CD8-positive, alpha-beta T cell (primary cell): ENCODE measurements at regions of chr15 and their contacts with region 1.

Region 1: GRCh38 chr15:78108299-78109084 is 16.1 kb downstream of the SH2D7 start:
- DNase-seq: peak; percentile 69 to 92 (median 85)
- ATAC-seq: peak; percentile 79
- H3K4me3 ChIP-seq: no peak overlapping the region
- H3K4me3 Mint-ChIP-seq: no peak overlapping the region
- H3K27ac ChIP-seq: no peak overlapping the region
- H3K27ac Mint-ChIP-seq: no peak overlapping the region
- H3K4me1 ChIP-seq: peaks cover 34% of the 10 kb centered on the region
- H3K4me1 Mint-ChIP-seq: peaks cover 35% of the 10 kb centered on the region
- H3K27me3 ChIP-seq: no peaks in the 10 kb centered on the region
- H3K27me3 Mint-ChIP-seq: no peaks in the 10 kb centered on the region
- CTCF ChIP-seq: peak; percentile 80

Region 2: DNA sequence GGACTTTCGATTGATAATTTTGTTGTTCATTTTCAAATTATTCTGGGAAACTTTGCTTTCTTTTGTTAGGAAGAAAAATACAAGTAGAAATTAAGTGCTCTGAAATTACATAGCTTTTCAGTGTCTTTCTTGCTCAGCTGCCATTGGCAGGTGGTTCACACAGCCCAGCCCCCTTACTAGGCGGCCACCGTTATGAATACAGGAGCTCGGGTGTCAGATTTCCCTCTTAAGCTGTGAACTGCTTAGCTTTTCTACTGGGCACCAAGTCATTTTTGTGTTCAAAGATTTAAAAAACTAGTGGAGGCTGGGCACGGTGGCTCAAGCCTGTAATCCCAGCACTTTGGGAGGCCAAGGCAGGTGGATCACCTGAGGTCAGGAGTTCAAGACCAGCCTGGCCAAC is 632.6 kb before region 1 on chr15:
- CTCF ChIA-PET with region 1: no interaction called
- POLR2A ChIA-PET with region 1: no interaction called
- intact Hi-C with region 1: no loop called
- DNase-seq: no peak
- ATAC-seq: no peak
- H3K4me3 ChIP-seq: no peak overlapping the region
- H3K4me3 Mint-ChIP-seq: no peak overlapping the region
- H3K27ac ChIP-seq: no peak overlapping the region
- H3K27ac Mint-ChIP-seq: no peak overlapping the region
- H3K4me1 ChIP-seq: no peaks in the 10 kb centered on the region
- H3K4me1 Mint-ChIP-seq: peaks cover 2% of the 10 kb centered on the region
- H3K27me3 ChIP-seq: no peaks in the 10 kb centered on the region
- H3K27me3 Mint-ChIP-seq: no peaks in the 10 kb centered on the region
- CTCF ChIP-seq: no peak

Region 3: GRCh38 chr15:77966540-77967290 is 141.8 kb before region 1 on chr15:
- CTCF ChIA-PET with region 1: interaction called, 203 read pairs
- POLR2A ChIA-PET with region 1: interaction called, 8 read pairs
- intact Hi-C with region 1: loop called (anchors 1 kb)
- DNase-seq: peak in 8 of 9 experiments; percentile 30 to 71 (median 55)
- ATAC-seq: peak; percentile 42
- H3K4me3 ChIP-seq: no peak overlapping the region
- H3K4me3 Mint-ChIP-seq: no peak overlapping the region
- H3K27ac ChIP-seq: no peak overlapping the region
- H3K27ac Mint-ChIP-seq: no peak overlapping the region
- H3K4me1 ChIP-seq: no peaks in the 10 kb centered on the region
- H3K4me1 Mint-ChIP-seq: no peaks in the 10 kb centered on the region
- H3K27me3 ChIP-seq: no peaks in the 10 kb centered on the region
- H3K27me3 Mint-ChIP-seq: peaks cover 2% of the 10 kb centered on the region
- CTCF ChIP-seq: peak; percentile 70

Region 4: DNA sequence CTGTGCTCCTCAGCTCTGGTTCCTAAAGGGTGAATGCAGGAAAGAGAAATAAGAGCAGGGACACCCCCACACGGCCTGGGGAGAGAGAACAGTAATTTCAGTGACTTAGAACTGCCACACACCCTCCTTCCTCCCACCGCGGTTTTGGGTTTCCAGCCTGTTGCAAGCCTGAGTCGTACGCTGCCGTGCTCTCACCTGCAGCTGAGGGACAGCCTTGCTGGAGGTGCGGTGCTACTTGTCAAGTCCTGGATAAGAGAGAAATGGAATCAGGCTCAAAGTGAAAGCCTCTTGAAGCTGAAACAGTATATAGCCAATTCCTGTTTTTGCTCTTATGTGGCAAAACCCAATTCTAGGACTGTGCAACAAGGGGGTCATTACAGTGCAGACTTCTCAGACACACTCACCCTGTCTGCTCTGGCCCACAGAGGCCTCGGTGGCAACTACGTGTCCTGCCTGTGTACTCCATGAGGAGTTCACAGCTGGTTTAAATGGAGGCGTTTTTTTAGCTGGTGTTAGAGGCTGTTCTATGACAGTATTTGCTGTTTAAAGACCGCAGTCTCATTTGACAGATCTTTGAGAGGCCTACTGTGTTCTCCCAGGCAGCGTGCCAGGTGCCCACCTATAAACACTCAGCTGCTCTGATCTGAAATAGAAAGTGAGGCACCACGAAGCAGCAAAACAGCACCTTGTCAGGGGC is 73.8 kb before region 1 on chr15:
- CTCF ChIA-PET with region 1: interaction called, 56 read pairs
- POLR2A ChIA-PET with region 1: interaction called, 10 read pairs
- intact Hi-C with region 1: loop called in 1 of 2 experiments (anchors 2 kb)
- DNase-seq: peak; percentile 61 to 91 (median 82)
- ATAC-seq: peak; percentile 82
- H3K4me3 ChIP-seq: peak overlapping the region; percentile 11 to 15
- H3K4me3 Mint-ChIP-seq: peak overlapping the region; percentile 76
- H3K27ac ChIP-seq: peak overlapping the region; percentile 59 to 88
- H3K27ac Mint-ChIP-seq: peak overlapping the region; percentile 97
- H3K4me1 ChIP-seq: peaks cover 65% of the 10 kb centered on the region
- H3K4me1 Mint-ChIP-seq: peaks cover 82% of the 10 kb centered on the region
- H3K27me3 ChIP-seq: no peaks in the 10 kb centered on the region
- H3K27me3 Mint-ChIP-seq: no peaks in the 10 kb centered on the region
- CTCF ChIP-seq: no peak

Region 5: DNA sequence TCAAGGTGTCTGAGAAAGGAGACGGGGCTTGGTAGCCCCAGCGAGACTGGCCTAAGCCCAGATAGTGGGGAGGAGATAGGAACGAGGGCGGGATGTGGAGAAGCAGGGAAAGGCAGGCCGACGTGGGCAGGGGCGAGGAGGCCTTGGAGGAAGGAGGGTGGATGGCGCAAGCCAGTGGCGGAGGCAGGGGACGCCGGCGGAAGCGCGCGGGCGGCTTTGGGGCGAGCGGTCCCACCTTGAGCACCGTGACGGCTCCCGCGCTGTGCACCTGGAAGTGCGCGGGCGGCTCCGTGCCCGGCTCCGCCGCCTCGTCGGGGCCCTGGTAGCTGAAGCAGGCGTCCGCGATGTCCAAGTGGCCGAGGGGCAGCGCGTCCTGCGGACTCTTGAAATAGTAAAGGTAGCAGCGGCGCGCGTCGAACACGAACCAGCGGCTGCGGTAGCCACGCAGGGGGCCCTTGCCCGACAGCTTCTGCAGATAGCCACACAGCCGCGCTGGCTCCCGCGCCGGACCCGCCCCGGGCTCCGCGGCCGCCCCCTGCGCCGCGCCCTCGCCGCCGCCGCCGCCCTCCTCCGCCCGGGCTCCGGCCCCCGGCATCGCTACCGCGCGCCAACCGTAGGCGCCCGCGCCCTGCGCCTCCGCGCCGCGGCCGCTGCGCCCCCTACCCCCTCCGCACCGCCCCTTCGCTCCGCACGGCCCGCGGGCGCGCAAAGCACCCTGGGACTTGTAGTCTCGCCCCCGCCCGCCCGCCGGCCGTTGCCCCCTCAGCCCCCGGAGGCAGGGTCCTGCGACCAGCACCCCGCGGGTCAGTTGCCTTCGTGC is 31.2 kb before region 1 on chr15 and contains the start of gene TBC1D2B:
- CTCF ChIA-PET with region 1: interaction called, 29 read pairs
- POLR2A ChIA-PET with region 1: no interaction called
- intact Hi-C with region 1: loop called in 1 of 2 experiments (anchors 1 kb)
- DNase-seq: peak in 8 of 9 experiments; percentile 56 to 86 (median 71)
- ATAC-seq: peak; percentile 80
- H3K4me3 ChIP-seq: peak within 1 kb of the TSS; percentile 87 to 90
- H3K4me3 Mint-ChIP-seq: peak within 1 kb of the TSS; percentile 100
- H3K27ac ChIP-seq: peak within 1 kb of the TSS; percentile 57 to 76
- H3K27ac Mint-ChIP-seq: peak within 1 kb of the TSS; percentile 99
- H3K4me1 ChIP-seq: peaks cover 35% of the 10 kb centered on the region
- H3K4me1 Mint-ChIP-seq: peaks cover 46% of the 10 kb centered on the region
- H3K27me3 ChIP-seq: no peaks in the 10 kb centered on the region
- H3K27me3 Mint-ChIP-seq: no peaks in the 10 kb centered on the region
- CTCF ChIP-seq: no peak
- total RNA-seq, gene TBC1D2B: 88.7 to 101 TPM

Region 6: GRCh38 chr15:78131295-78132061 is 23.0 kb after region 1 on chr15 and contains the start of gene CIB2:
- CTCF ChIA-PET with region 1: interaction called, 30 read pairs
- POLR2A ChIA-PET with region 1: no interaction called
- intact Hi-C with region 1: loop called in 1 of 2 experiments (anchors 1 kb)
- DNase-seq: peak; percentile 47 to 89 (median 74)
- ATAC-seq: peak; percentile 87
- H3K4me3 ChIP-seq: peak within 1 kb of the TSS; percentile 82 to 91
- H3K4me3 Mint-ChIP-seq: peak within 1 kb of the TSS; percentile 82
- H3K27ac ChIP-seq: peak within 1 kb of the TSS; percentile 65 to 89
- H3K27ac Mint-ChIP-seq: peak within 1 kb of the TSS; percentile 87
- H3K4me1 ChIP-seq: peaks cover 15% of the 10 kb centered on the region
- H3K4me1 Mint-ChIP-seq: peaks cover 26% of the 10 kb centered on the region
- H3K27me3 ChIP-seq: no peaks in the 10 kb centered on the region
- H3K27me3 Mint-ChIP-seq: no peaks in the 10 kb centered on the region
- CTCF ChIP-seq: peak; percentile 75
- total RNA-seq, gene CIB2: 1.2 to 1.9 TPM

Region 7: GRCh38 chr15:78422571-78423340 is 314.3 kb after region 1 on chr15:
- CTCF ChIA-PET with region 1: interaction called, 6 read pairs
- POLR2A ChIA-PET with region 1: interaction called, 3 read pairs
- intact Hi-C with region 1: loop called in 1 of 2 experiments (anchors 5 kb)
- DNase-seq: peak; percentile 31 to 75 (median 57)
- ATAC-seq: peak; percentile 92
- H3K4me3 ChIP-seq: no peak overlapping the region
- H3K4me3 Mint-ChIP-seq: no peak overlapping the region
- H3K27ac ChIP-seq: no peak overlapping the region
- H3K27ac Mint-ChIP-seq: no peak overlapping the region
- H3K4me1 ChIP-seq: no peaks in the 10 kb centered on the region
- H3K4me1 Mint-ChIP-seq: peaks cover 7% of the 10 kb centered on the region
- H3K27me3 ChIP-seq: no peaks in the 10 kb centered on the region
- H3K27me3 Mint-ChIP-seq: peaks cover 14% of the 10 kb centered on the region
- CTCF ChIP-seq: peak; percentile 92